ENCODE measurements at regions of chr4 and their contacts with region 1.

Region 1: DNA sequence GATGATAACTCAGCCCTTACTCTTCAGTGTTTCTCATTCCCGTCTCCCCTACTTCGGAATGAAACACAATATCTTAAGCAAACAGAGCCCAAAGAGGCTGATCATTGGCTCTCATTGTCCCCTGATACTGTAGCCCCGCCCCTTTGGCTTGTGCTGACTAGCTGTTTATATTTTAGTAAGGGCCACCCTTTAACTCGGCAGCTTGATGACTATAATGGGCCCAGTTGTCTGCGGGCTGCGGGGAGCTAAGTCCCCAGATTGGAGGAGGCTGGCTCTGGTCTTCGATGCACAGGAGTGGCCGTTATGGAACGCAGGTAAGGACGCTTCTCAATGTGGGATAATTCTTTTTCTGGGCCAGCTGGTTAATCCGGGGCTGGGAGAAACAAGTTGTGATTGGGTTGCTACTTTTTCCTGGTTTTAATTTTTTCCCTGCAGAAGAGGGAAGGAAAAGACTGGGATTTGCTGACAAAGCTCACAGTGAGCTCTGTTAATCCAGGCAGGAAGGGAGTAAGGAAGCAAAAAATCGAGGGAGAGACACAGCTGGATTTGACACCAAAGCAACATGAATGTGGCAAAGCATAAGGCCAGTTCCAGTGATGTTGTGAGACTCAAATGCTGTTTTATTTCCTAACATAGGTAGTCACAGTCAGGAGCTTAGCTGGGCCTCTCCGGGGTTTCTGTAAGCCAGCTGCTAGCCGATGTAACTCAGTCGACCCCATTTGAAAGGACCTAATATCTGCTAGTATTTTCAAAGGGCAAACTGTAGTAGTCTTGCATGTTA is at the start of gene TRIM2:
- DNase-seq: peak; percentile 83 to 88
- H3K4me3 ChIP-seq: peak within 1 kb of the TSS; percentile 69
- H3K27ac ChIP-seq: peak within 1 kb of the TSS; percentile 83
- H3K4me1 ChIP-seq: peaks cover 15% of the 10 kb centered on the region
- H3K27me3 ChIP-seq: no peaks in the 10 kb centered on the region
- CTCF ChIP-seq: no peak
- total RNA-seq, gene TRIM2: 56.0 and 87.0 TPM in 2 replicates

Region 2: DNA sequence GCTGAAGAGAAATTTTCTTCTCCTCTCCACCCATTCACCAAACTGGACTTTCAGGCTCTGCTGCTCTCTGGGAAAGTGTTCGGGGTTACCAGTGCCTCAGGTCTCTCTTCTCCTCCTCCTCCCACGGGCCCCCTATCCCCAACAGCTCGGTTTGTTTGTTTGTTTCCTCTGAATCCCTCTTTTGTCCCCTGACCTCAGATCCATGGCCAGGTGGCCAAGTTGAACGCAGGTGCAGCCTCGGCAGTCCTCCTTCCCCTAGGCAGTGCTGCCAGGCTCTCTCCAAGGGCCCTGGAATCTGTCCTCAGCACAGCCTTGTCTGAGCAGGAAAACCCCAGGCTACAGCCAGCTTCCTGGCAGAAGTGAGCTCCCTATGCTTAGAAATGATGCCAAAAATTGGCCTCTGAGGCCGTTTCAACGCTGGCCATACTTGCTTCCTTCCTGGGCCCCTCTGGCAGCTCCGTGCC is 208.3 kb before region 1 on chr4:
- CTCF ChIA-PET with region 1: no interaction called
- POLR2A ChIA-PET with region 1: no interaction called
- intact Hi-C with region 1: loop called (anchors 10 kb)
- DNase-seq: peak; percentile 78 to 85
- H3K4me3 ChIP-seq: peak overlapping the region; percentile 31; the same call in 1 of the 2 replicates
- H3K27ac ChIP-seq: peak overlapping the region; percentile 84
- H3K4me1 ChIP-seq: peaks cover 53% of the 10 kb centered on the region
- H3K27me3 ChIP-seq: no peaks in the 10 kb centered on the region
- CTCF ChIP-seq: no peak

Region 3: DNA sequence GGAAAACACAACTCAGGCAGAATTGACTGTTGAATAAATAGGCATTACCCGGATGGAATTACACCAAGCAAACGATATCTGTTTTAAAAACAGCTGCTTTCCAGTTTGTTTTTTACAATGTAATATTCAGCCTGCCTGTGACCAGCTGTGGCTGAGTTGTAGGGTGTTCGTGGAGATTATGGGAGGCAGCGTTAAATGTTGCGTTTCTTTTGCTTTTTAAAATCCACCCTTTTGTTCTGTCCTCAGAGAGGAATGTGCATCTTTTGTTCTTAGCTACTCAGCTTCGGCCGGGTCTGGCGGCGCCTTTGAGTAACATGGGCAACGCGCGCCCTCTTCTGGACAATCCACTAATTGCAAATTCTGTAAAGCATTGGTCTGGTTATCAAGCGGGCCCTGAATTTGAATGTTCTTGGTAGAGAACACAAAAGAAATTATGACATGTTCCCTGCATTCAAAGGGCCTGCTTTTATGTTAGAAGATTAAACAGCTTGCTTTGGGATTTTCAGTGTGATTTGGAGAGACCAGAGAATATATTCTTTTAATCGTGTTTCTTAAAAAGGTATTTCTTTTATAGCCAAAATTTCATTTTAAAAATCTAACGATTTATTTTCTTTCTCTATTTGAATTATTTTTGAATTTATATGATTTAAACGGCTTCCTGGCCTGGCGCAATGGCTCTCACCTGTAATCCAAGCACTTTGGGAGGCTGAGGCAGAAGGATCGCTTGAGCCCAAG is 76.5 kb before region 1 on chr4:
- CTCF ChIA-PET with region 1: no interaction called
- POLR2A ChIA-PET with region 1: no interaction called
- intact Hi-C with region 1: no loop called
- DNase-seq: peak; percentile 63 to 84
- H3K4me3 ChIP-seq: no peak overlapping the region
- H3K27ac ChIP-seq: no peak overlapping the region
- H3K4me1 ChIP-seq: no peaks in the 10 kb centered on the region
- H3K27me3 ChIP-seq: no peaks in the 10 kb centered on the region
- CTCF ChIP-seq: peak; percentile 84

Region 4: GRCh38 chr4:153153339-153153871 is 51.0 kb before region 1 on chr4:
- CTCF ChIA-PET with region 1: interaction called, 3 read pairs
- POLR2A ChIA-PET with region 1: no interaction called
- intact Hi-C with region 1: loop called (anchors 2 kb)
- DNase-seq: peak; percentile 36 to 63
- H3K4me3 ChIP-seq: peak overlapping the region; percentile 77
- H3K27ac ChIP-seq: no peak overlapping the region; the same call in 1 of the 2 replicates
- H3K4me1 ChIP-seq: peaks cover 15% of the 10 kb centered on the region
- H3K27me3 ChIP-seq: no peaks in the 10 kb centered on the region
- CTCF ChIP-seq: no peak

Region 5: DNA sequence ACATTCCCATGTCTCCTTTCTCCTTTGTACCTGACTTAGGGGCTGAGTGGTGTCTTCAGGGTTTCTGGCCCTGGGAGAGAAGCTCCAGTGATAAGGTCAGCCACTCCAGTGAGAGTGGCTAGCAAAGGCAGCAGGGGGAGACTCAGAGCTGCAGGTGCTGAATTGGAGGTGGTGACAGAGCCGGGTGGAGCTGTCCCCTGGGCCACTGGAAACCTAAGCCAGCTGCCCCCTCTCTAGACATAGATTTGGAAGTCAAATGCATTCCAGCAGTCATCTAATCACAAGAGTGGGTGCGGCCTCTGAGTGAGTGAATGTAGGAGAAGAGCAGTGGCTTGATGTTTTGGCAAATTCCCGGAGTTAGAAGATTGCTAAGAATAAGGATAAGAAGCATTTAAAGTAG is 28.3 kb after region 1 on chr4:
- CTCF ChIA-PET with region 1: interaction called, 5 read pairs
- POLR2A ChIA-PET with region 1: no interaction called
- intact Hi-C with region 1: loop called (anchors 1 kb)
- DNase-seq: peak; percentile 57 to 60
- H3K4me3 ChIP-seq: no peak overlapping the region
- H3K27ac ChIP-seq: peak overlapping the region; percentile 68
- H3K4me1 ChIP-seq: peaks cover 62% of the 10 kb centered on the region
- H3K27me3 ChIP-seq: no peaks in the 10 kb centered on the region
- CTCF ChIP-seq: no peak; the same call in 1 of the 2 replicates

Region 6: GRCh38 chr4:153296040-153296823 is 91.8 kb after region 1 on chr4:
- CTCF ChIA-PET with region 1: no interaction called
- POLR2A ChIA-PET with region 1: interaction called, 27 read pairs
- intact Hi-C with region 1: loop called (anchors 10 kb)
- DNase-seq: peak in 1 of 2 experiments; percentile 50
- H3K4me3 ChIP-seq: no peak overlapping the region
- H3K27ac ChIP-seq: peak overlapping the region; percentile 68; the same call in 1 of the 2 replicates
- H3K4me1 ChIP-seq: peaks cover 41% of the 10 kb centered on the region
- H3K27me3 ChIP-seq: no peaks in the 10 kb centered on the region
- CTCF ChIP-seq: no peak

Region 7: GRCh38 chr4:153326513-153326912 is 122.1 kb after region 1 on chr4:
- CTCF ChIA-PET with region 1: no interaction called
- POLR2A ChIA-PET with region 1: interaction called, 12 read pairs
- intact Hi-C with region 1: no loop called
- DNase-seq: peak; percentile 44 to 83
- H3K4me3 ChIP-seq: no peak overlapping the region
- H3K27ac ChIP-seq: peak overlapping the region; percentile 33
- H3K4me1 ChIP-seq: peaks cover 25% of the 10 kb centered on the region
- H3K27me3 ChIP-seq: no peaks in the 10 kb centered on the region
- CTCF ChIP-seq: no peak